Right ventricle myocardium inferior (tissue), 1 donor: ENCODE measurements at regions of chr10 and their contacts with region 1.

Region 1: DNA sequence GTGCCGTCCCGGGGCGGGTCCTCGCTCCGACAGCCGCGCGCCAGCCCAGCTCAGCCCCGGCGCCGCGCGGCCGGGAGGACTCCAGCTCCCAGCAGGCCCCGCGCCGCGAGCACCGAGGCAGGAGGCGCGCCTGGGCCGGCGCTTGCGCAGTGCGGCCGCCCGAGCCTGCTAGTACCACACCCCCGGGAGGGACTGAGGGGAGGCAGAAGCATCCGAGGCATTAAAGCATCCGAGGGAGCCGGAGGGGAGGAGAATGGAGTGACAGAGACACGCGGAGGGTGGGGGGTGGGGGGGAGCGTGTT is at the start of gene GRK5:
- DNase-seq: peak; percentile 99
- ATAC-seq: peak; percentile 96
- total RNA-seq, gene GRK5: 48.6 TPM

Region 2: GRCh38 chr10:119250641-119251314 is 43.5 kb after region 1 on chr10:
- intact Hi-C with region 1: loop called (anchors 2 kb)
- DNase-seq: no peak
- ATAC-seq: no peak

Region 3: DNA sequence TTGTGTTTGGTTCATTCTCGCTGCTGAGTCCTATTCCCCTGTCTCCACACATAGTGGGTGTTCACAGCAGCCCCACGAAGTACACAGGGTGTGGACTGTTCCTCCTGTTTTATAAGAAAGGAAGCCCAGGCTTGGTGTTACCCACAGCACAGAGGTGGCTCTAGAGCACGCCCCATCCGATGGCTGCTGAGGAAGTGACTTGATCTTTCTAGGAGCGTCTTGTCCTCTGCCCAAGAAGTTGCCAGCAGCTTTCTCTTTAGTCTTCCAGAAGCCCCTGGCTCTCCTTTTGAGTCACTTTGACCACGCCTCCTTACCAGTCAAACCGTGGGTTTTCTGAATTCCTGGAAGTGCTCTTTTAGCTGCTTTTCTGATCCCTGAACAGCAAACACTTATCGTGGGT is 94.1 kb after region 1 on chr10:
- intact Hi-C with region 1: loop called (anchors 2 kb)
- DNase-seq: no peak
- ATAC-seq: no peak

Region 4: GRCh38 chr10:119416855-119417254 is 209.5 kb after region 1 on chr10:
- intact Hi-C with region 1: loop called (anchors 1 kb)
- DNase-seq: peak; percentile 82
- ATAC-seq: no peak

Region 5: DNA sequence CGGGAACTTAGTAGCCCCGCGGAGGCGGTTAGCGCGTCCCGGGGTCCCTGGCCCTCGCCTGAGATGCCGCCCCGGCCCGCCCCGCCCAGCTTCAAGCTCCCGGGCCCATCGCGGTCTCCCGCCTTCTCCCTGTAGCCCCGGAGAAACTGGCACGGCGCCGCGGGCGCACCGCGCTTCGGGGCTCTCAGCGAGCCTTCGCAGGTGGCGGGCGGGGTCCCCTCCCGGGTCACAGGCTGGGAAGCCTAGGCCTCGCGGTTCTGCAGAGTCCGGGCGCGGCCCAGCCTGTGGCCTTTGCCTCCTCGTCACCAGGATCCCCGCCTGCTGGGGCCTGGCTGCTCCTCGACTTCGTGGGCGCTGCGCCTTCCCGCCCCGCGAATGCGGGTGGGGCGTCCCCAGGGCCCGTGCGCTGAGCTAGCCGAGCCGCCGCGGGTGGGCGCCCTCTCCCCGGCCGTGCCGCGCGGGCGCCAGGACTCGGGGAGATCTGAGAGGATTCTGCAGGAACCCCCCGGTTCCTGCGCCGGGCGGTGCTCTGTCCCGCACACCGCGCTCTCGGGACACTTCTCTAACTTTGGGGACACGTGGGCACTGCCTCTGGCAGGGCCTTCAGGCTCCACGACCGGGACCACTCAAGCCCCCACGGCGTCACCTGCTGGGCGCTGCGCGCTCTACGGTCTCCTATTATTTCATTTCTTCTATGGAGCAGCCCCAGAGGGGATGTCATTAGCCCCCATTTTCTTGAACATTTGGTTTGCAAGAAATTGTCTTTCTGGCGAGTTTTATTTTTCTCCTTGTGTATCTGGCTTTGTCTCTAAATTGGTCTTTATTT is 335.9 kb after region 1 on chr10:
- intact Hi-C with region 1: loop called (anchors 2 kb)
- DNase-seq: peak; percentile 85
- ATAC-seq: peak; percentile 72